Spleen (tissue), 13 donors: ENCODE measurements at regions of chr14 and their contacts with region 1.

Region 1: GRCh38 chr14:104768437-104769323 is 15.7 kb downstream of the SIVA1 start:
- DNase-seq: peak; percentile 98
- H3K4me3 ChIP-seq: no peak overlapping the region
- H3K27ac ChIP-seq: peak overlapping the region in 6 of 8 donors; percentile 27 to 74 (median 56)
- H3K4me1 ChIP-seq: peaks cover 13 to 46% (median 30%) of the 10 kb centered on the region in 6 donors
- H3K27me3 ChIP-seq: no peaks in the 10 kb centered on the region
- CTCF ChIP-seq: peak; percentile 82 to 98 (median 98)
- POLR2A ChIP-seq: no peak

Region 2: GRCh38 chr14:104824384-104824964 is 55.8 kb after region 1 on chr14:
- intact Hi-C with region 1: loop called (anchors 2 kb)
- DNase-seq: no peak
- H3K4me3 ChIP-seq: no peak overlapping the region
- H3K27ac ChIP-seq: no peak overlapping the region
- H3K4me1 ChIP-seq: peaks cover 14 to 41% (median 29%) of the 10 kb centered on the region in 6 donors
- H3K27me3 ChIP-seq: peaks cover 0 to 34% (median 6%) of the 10 kb centered on the region in 7 donors
- CTCF ChIP-seq: no peak
- POLR2A ChIP-seq: no peak